ENCODE measurements at regions of chr11 and their contacts with region 1.

Region 1: DNA sequence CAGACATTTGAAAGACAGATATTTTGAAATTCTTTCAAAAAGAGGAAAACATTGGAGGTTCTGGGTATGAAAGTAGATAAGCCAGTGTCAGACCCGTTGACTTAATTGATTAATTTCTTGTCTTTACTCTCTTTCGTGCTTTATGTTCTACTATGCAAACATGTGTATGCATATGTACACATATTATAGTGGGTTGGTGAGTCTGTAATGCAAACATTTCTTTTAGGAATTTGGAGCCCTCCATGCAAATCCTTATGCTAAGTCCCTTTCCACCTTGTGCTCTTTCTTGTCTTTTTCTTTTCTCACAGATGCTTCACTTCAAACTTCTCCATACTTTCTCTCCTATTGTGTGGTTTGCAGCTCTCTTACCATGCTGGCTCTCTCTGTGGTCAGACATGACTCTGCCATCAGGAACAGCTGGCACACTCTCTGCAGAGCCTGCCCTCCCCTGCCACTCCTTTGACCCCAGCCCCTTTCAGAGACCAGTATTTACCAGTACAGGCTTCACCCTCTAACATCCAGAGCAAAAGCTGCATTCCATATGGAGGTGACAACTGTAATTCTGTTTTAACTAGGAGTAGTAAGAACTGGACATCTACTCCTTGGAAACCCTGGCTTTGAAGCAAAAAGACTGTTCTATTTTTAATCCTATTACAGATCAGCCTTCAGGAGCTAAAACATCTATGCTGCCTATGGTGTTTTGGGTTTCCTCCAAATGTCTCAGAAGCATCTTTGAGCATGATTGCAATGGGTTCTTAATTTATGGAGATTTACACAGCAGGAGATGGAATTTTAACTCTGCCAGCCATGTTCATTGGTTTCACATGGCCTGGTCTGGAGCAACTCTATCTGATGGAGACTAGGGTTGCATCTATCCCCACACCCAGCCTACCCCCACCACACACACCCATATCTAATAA is 386.9 kb upstream of the FAT3 start:
- DNase-seq: no peak
- H3K4me3 ChIP-seq: no peak overlapping the region
- H3K4me3 Mint-ChIP-seq: no peak overlapping the region
- H3K27ac Mint-ChIP-seq: no peak overlapping the region
- H3K4me1 ChIP-seq: no peaks in the 10 kb centered on the region
- H3K4me1 Mint-ChIP-seq: peaks cover 7% of the 10 kb centered on the region
- H3K27me3 ChIP-seq: no peaks in the 10 kb centered on the region; the same call in 1 of the 2 replicates
- H3K27me3 Mint-ChIP-seq: no peaks in the 10 kb centered on the region
- CTCF ChIP-seq: no peak

Region 2: GRCh38 chr11:91880660-91881059 is 43.0 kb after region 1 on chr11:
- CTCF ChIA-PET with region 1: no interaction called
- POLR2A ChIA-PET with region 1: no interaction called
- intact Hi-C with region 1: loop called (anchors 5 kb)
- DNase-seq: no peak
- H3K4me3 ChIP-seq: no peak overlapping the region
- H3K4me3 Mint-ChIP-seq: no peak overlapping the region
- H3K27ac Mint-ChIP-seq: no peak overlapping the region
- H3K4me1 ChIP-seq: no peaks in the 10 kb centered on the region
- H3K4me1 Mint-ChIP-seq: no peaks in the 10 kb centered on the region
- H3K27me3 ChIP-seq: no peaks in the 10 kb centered on the region
- H3K27me3 Mint-ChIP-seq: peaks cover 11% of the 10 kb centered on the region
- CTCF ChIP-seq: no peak